ENCODE measurements at regions of chr5 and their contacts with region 1.

Region 1: GRCh38 chr5:149035372-149035790 is 27.5 kb downstream of the SH3TC2 start:
- DNase-seq: no peak
- H3K4me3 ChIP-seq: no peak overlapping the region
- H3K27me3 ChIP-seq: no peaks in the 10 kb centered on the region
- CTCF ChIP-seq: peak; percentile 95

Region 2: DNA sequence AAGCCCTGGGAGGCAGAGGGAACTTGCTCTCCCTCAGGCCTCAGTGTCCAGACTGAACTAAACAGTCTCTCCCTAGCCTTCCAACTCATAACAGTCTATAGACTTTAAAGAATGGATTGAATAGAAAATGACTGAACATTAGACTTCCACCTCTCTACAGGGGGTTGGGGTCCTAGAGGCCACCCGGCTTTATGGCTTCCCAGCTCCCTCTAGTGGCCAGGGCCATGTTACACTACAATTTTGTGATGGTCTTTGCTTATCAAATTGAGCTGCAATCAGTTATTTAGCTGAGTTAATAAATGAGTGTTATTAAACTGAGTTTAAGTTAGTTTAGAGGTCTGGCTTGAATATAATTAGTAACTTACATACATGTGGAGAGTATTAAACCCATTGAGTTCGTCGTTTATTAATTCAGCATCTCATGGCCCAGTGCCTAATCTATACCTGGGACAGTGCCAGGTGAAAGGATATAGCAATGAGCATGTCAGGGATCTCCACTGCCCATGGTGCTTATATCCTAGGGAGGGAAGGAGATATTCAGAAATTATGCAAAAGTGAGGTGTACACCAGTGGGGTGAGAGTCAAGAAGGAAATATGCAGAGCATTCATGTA is 77.7 kb before region 1 on chr5:
- CTCF ChIA-PET with region 1: interaction called, 21 read pairs
- POLR2A ChIA-PET with region 1: no interaction called
- DNase-seq: no peak
- H3K4me3 ChIP-seq: no peak overlapping the region
- H3K27me3 ChIP-seq: no peaks in the 10 kb centered on the region; the same call in 1 of the 2 replicates
- CTCF ChIP-seq: peak; percentile 92

Region 3: DNA sequence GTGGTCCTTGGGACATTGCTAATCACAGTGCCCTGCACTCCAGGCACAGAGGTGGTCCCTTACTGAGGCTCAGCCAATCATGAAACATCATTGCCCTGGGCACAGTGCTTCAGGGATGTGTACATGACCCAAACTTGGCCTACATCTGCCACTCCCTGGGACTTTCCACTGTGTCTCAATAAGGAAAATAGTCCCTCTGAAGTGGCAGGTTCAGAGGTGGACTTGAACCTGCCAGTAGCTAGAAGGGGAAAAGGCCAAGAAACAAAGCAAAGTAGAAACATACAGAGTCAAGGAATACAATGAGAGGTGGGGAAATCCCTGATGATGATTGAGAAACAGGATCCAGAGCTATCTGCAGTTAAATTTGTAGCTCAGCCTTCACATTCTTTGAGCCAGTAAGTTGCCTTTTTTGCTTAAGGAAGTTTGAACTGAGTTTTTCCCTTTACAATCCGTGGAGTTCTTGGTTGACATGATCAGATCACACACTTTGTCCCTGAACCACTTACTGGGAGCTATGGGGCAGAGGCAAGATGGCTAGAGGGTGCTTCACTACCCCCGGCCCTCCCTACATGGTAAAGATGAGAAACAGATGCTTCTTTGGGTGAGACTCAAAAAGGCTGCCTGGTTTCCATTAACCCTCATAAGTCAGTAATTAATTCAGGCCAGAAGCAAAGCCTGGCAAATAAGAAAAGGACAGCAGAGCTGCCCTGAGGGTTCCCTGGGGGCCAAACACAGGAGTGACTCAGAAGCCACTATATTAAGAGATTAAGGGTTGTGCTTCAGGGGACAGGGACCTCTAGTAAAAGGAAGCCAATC is 30.1 kb before region 1 on chr5:
- CTCF ChIA-PET with region 1: interaction called, 26 read pairs
- POLR2A ChIA-PET with region 1: no interaction called
- DNase-seq: peak; percentile 69
- H3K4me3 ChIP-seq: no peak overlapping the region
- H3K27me3 ChIP-seq: no peaks in the 10 kb centered on the region
- CTCF ChIP-seq: no peak

Region 4: DNA sequence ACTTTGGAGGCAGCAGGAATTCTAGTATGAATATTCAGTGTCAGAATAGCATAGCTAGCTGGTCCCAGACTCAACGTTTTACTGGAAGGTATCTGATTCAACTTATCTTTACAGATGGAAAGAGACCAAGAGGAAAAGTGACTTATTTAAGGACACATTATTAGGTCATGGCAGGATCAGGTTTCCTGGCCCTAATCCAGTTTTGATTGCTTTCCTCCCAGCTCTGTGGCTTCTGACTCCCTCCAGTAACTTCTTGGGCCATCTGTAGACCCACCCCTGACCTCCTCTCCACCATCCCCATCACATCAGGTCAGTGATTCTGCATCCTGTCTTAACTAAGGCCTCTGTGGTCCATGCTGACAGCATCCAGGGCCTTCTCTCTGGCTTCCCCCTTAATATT is 10.9 kb before region 1 on chr5:
- CTCF ChIA-PET with region 1: interaction called, 19 read pairs
- POLR2A ChIA-PET with region 1: no interaction called
- DNase-seq: no peak
- H3K4me3 ChIP-seq: no peak overlapping the region
- H3K27me3 ChIP-seq: no peaks in the 10 kb centered on the region
- CTCF ChIP-seq: no peak

Region 5: DNA sequence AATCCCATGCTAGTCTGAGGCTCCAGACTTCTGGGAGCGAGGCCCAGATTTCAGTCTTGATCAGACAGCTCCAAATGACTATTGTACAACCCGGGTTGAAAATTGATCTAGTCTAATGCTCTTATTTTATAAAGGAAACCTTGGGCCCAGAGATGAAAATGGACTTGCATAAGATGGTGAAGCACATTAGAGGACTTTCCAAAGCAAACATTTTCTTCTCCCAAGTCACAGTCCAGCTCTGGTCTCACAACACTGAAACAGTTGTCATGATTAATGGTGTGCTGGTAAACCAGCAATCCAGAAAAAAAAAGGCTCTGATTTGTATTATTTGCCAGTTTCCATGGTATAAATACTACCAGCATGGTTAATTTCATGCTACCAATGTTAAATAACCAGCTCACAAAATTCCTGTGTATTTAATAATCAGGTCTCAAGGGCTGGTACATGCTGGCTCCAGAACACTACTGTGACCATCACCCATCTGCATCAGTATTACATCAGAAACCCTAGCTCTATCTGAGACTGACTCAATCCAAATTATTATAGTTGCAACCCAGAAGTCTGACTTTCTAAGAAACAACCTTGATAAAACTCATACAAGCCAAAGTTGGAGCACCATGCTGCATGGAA is 73.4 kb after region 1 on chr5:
- CTCF ChIA-PET with region 1: interaction called, 49 read pairs
- POLR2A ChIA-PET with region 1: no interaction called
- DNase-seq: no peak
- H3K4me3 ChIP-seq: no peak overlapping the region
- H3K27me3 ChIP-seq: no peaks in the 10 kb centered on the region
- CTCF ChIP-seq: no peak

Region 6: GRCh38 chr5:149448831-149449714 is 413.7 kb after region 1 on chr5:
- CTCF ChIA-PET with region 1: no interaction called
- POLR2A ChIA-PET with region 1: no interaction called
- DNase-seq: no peak
- H3K4me3 ChIP-seq: no peak overlapping the region
- H3K27me3 ChIP-seq: no peaks in the 10 kb centered on the region
- CTCF ChIP-seq: peak; percentile 51

Measured in BJ (cell line).